Heart left ventricle (tissue), 16 donors: ENCODE measurements at regions of chr3 and their contacts with region 1.

Region 1: DNA sequence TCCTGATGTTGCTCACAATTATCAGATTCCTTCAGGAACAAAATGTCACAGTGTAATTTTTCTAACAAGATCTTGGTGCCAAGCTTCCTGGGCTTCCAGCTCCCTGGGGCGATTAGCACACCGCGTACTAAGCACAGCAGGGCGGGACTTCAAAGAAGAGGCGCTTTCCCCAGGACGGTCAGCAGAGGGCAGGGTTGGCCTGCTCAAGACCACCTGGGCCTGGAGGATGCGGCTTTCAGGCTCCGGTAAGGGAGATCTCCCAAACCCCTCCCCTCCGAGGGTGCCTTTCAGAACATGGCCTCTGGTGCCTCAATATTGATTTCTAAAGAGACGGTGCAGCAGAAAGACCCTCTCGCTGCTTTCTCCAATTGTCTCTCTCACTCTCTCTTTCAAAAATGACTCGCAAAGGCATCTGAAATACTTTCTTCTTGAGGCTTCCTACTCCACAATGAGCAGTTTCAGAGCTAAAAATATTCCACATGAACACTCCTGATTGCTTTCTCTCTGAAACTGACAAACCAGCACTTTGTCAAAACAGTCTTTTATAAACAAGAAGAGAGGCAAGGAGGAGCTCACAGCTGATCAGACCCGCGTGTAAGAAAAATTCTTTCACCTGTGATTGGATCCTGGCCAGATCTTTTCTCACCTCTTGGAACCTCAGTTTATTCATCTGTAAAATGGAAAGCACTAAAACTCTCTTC is 154.0 kb downstream of the ADAMTS9 start:
- DNase-seq: peak; percentile 83 to 87 (median 85)
- ATAC-seq: peak; percentile 96 to 97 (median 96)
- H3K4me3 ChIP-seq: peak overlapping the region in 3 of 12 donors; percentile 12 to 34 (median 14)
- H3K27ac ChIP-seq: peak overlapping the region in 4 of 12 donors; percentile 20 to 60 (median 34)
- H3K4me1 ChIP-seq: peaks cover 0 to 14% (median 2%) of the 10 kb centered on the region in 12 donors
- H3K27me3 ChIP-seq: no peaks in the 10 kb centered on the region
- CTCF ChIP-seq: peak; percentile 61 to 94 (median 89)
- POLR2A ChIP-seq: no peak

Region 2: DNA sequence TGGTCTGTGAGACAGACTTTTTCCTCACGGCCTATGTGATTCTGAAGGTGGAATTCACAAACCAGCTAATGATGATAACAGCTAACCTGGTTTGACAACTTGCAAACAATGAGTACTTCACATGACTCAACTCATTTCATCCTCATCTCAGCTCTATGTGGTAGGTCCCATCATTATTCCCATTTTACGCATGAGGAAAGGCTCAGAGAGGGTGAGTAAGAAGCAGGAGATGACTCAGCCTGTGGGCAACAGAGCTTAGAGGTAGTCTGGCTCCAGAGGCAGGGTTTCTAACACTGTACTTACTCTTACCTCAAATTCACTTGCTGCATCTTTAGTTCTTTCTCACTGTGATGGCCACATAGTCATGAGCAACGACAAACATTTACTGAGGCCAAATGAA is 484.6 kb before region 1 on chr3:
- intact Hi-C with region 1: no loop called
- DNase-seq: no peak
- ATAC-seq: no peak
- H3K4me3 ChIP-seq: no peak overlapping the region
- H3K27ac ChIP-seq: no peak overlapping the region
- H3K4me1 ChIP-seq: peaks cover 0 to 9% (median 0%) of the 10 kb centered on the region in 12 donors
- H3K27me3 ChIP-seq: no peaks in the 10 kb centered on the region
- CTCF ChIP-seq: no peak
- POLR2A ChIP-seq: no peak

Region 3: DNA sequence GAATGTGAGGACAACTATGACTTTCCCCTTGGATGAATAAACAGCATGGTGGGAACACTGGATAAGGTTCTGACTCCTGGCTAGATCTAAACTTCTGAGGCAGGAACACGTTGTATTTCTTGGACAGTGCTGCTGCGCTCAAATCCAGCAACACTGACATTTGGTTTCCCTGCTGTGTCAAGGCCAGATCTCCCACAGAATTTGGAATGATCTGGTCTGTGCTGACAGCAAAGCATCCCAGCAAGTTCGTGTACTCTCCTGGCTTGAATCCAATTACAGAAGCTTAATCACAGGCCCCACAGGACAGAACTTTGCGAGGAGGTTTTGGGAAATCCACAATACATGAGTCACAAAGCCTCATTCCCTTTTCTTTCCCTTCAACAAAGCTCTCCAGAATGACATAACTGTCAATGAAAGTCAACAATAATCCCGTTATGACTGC is 61.5 kb after region 1 on chr3:
- intact Hi-C with region 1: no loop called
- DNase-seq: peak; percentile 59 to 79 (median 69)
- ATAC-seq: peak; percentile 91 to 93 (median 92)
- H3K4me3 ChIP-seq: no peak overlapping the region
- H3K27ac ChIP-seq: peak overlapping the region in 11 of 12 donors; percentile 13 to 73 (median 47)
- H3K4me1 ChIP-seq: peaks cover 0 to 21% (median 9%) of the 10 kb centered on the region in 12 donors
- H3K27me3 ChIP-seq: no peaks in the 10 kb centered on the region
- CTCF ChIP-seq: no peak
- POLR2A ChIP-seq: no peak

Region 4: DNA sequence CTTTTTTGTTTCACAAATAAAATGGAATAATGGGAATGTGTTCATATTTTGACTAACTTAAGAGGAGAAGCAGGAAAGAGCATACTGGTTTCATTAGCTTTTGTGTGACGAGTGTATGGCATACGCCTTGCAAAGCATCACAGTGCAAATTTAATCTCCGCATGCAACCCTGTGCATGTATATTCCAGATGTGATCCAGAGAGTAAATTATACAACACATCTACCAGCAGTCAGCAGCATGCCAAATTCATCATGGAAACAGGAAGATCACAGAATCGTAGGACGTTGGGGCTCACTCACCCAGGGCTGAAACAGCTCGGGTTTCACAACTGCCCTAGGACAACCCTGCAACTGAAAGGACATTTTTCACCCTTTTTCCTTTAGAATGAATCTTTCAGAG is 100.7 kb after region 1 on chr3:
- intact Hi-C with region 1: no loop called
- DNase-seq: peak in 1 of 5 donors; percentile 24
- ATAC-seq: peak in 1 of 4 donors; percentile 67
- H3K4me3 ChIP-seq: no peak overlapping the region
- H3K27ac ChIP-seq: peak overlapping the region in 4 of 12 donors; percentile 29 to 55 (median 38)
- H3K4me1 ChIP-seq: peaks cover 0 to 4% (median 0%) of the 10 kb centered on the region in 12 donors
- H3K27me3 ChIP-seq: no peaks in the 10 kb centered on the region
- CTCF ChIP-seq: no peak
- POLR2A ChIP-seq: no peak

Region 5: GRCh38 chr3:64696896-64697295 is 163.1 kb after region 1 on chr3:
- intact Hi-C with region 1: no loop called
- DNase-seq: no peak
- ATAC-seq: peak in 1 of 4 donors; percentile 35
- H3K4me3 ChIP-seq: no peak overlapping the region
- H3K27ac ChIP-seq: no peak overlapping the region
- H3K4me1 ChIP-seq: peaks cover 0 to 29% (median 11%) of the 10 kb centered on the region in 12 donors
- H3K27me3 ChIP-seq: no peaks in the 10 kb centered on the region
- CTCF ChIP-seq: no peak
- POLR2A ChIP-seq: no peak

Region 6: DNA sequence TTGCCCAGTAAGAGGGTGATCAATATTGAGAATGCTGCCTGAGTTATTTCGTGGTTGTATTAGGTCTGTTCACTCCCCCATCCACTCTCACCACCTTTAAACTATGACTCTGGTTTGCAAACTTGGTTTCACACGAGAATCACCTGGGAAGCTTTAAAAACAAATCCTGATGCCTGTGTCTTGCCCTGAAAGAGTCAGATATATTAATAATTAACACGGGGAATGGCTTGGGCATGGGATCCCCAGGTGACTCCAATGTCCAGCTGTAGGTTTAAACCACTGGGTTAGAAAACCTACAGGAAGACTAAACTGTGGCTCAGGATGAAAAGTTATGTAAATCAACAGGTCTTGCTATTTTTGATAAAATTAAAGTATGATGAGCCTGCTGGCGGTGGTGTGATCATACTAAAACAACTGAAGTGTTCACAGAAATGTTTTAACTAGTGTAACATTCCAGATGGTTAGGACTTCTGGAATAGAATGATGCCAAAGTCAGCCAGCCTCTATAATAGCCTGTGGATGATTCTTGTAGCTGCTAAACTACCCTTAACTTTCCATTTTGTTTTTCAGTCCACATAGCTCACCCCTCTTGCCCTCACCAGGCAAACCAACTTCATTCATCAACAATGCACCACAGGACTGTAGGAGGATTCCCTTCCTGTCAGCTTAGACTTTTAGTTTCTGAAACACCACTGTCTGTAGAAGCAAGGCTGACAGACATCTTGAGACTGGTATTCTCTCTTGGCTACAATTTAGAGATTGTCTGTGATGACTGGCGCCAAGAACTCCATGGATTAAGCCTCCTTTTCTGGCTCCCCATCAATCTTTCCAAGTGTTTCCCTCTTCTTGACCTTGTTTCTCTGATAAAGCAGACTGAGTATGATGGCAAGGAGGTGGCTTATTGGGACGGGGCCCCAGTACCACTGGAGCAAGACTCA is 273.2 kb after region 1 on chr3:
- intact Hi-C with region 1: loop called in 1 of 10 experiments (anchors 10 kb)
- DNase-seq: no peak
- ATAC-seq: no peak
- H3K4me3 ChIP-seq: no peak overlapping the region
- H3K27ac ChIP-seq: no peak overlapping the region
- H3K4me1 ChIP-seq: peaks cover 0 to 7% (median 0%) of the 10 kb centered on the region in 12 donors
- H3K27me3 ChIP-seq: no peaks in the 10 kb centered on the region
- CTCF ChIP-seq: no peak
- POLR2A ChIP-seq: no peak

Region 7: DNA sequence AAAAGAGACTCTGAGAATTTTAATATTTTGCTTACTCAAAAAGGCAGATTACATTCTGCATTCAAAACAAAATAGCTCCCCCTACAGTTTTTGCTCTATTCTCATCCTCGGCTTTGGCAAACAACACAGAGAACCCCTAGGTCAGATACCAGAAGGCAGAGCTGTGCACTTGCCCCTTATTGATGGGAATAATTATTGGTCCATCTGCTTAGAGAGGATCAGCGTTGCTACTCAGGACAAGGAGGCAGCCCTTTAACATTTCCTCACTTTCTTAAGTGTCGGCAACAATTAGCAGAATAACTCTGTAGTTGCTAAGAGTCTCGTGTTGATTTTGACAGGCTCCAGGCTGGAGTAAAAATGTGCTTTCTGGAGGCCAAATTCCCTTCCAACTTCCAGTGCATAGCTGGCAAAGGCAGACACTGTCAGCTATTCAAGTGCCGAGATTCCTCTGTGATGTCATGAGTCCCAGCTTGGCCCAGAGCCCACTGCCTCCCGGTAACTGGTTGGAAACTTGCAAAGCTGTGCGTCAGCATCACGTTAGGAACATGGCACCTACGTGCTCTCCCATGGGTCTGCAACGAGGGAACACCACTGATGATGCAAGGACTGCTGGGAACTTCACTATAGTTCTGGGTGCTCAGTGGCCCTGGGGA is 636.7 kb after region 1 on chr3:
- intact Hi-C with region 1: loop called in 8 of 10 experiments (anchors 2 to 10 kb)
- DNase-seq: peak; percentile 84 to 95 (median 86)
- ATAC-seq: peak; percentile 79 to 97 (median 94)
- H3K4me3 ChIP-seq: no peak overlapping the region
- H3K27ac ChIP-seq: peak overlapping the region in 11 of 12 donors; percentile 40 to 85 (median 75)
- H3K4me1 ChIP-seq: peaks cover 0 to 27% (median 17%) of the 10 kb centered on the region in 12 donors
- H3K27me3 ChIP-seq: no peaks in the 10 kb centered on the region
- CTCF ChIP-seq: peak; percentile 21 to 65 (median 52)
- POLR2A ChIP-seq: no peak

Region 8: GRCh38 chr3:65412588-65412987 is 878.8 kb after region 1 on chr3:
- intact Hi-C with region 1: loop called in 9 of 10 experiments (anchors 5 to 10 kb)
- DNase-seq: peak in 4 of 5 donors; percentile 74 to 81 (median 76)
- ATAC-seq: peak; percentile 88 to 93 (median 92)
- H3K4me3 ChIP-seq: no peak overlapping the region
- H3K27ac ChIP-seq: peak overlapping the region in 6 of 12 donors; percentile 49 to 81 (median 56)
- H3K4me1 ChIP-seq: peaks cover 7 to 57% (median 31%) of the 10 kb centered on the region in 12 donors
- H3K27me3 ChIP-seq: no peaks in the 10 kb centered on the region
- CTCF ChIP-seq: peak in 9 of 12 donors; percentile 30 to 66 (median 43)
- POLR2A ChIP-seq: no peak

Region 9: DNA sequence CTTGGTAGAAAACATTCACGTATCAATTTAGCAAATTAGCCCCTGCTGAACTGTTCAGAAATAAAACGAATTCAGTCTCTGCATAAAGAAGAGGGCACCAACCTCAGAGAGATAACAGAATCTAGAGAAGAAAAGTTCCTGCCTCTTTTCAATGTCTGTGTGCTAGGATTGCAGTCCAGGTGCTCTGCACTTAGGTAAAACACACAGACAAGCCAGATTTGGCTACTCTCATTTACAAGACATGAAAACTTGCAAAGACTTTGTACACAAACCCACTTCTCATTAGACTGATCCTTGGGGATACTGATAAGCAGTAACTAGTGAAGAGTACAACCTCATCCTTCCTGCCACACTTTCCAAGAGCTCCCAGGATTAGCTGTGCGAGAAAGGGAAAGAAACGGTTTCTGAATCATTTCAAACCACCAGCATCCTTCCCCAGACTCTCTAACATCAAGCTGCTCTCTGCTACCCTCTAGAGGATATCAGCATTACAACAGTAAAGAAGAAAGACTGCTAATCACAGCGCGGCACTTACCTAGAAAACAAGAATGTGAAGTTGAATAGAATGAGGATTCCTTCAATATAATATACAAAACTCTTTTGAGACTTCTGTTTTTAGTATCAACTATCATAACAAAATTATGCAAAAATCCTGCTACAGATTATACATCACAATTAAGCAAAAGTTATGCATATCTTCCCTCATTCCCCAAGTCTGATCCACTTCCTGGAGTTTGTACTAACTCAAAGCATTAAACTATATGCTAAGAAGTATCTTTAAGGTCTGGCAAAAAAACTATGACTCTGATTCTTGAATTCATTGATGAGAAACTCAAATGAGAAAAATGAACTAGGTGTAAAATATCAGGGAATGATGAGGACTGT is 1198.5 kb after region 1 on chr3:
- intact Hi-C with region 1: loop called in 4 of 10 experiments (anchors 10 kb)
- DNase-seq: no peak
- ATAC-seq: peak in 3 of 4 donors; percentile 62 to 74 (median 63)
- H3K4me3 ChIP-seq: no peak overlapping the region
- H3K27ac ChIP-seq: no peak overlapping the region
- H3K4me1 ChIP-seq: peaks cover 0 to 38% (median 30%) of the 10 kb centered on the region in 12 donors
- H3K27me3 ChIP-seq: no peaks in the 10 kb centered on the region
- CTCF ChIP-seq: peak; percentile 68 to 88 (median 81)
- POLR2A ChIP-seq: no peak